Activated CD8-positive, alpha-beta T cell treated with anti-CD3 and anti-CD28 coated beads, Interleukin-2, amount 10 ng/mL, durations not matched to agents 7 days and 5 days (primary cell): ENCODE measurements at regions of chr12 and their contacts with region 1.

Region 1: GRCh38 chr12:62813031-62813829 is 121.7 kb downstream of the PPM1H start:
- DNase-seq: peak; percentile 52
- ATAC-seq: peak; percentile 55
- H3K4me3 Mint-ChIP-seq: peak overlapping the region; percentile 38
- H3K27ac Mint-ChIP-seq: no peak overlapping the region
- H3K4me1 Mint-ChIP-seq: peaks cover 21% of the 10 kb centered on the region
- H3K27me3 Mint-ChIP-seq: peaks cover 24% of the 10 kb centered on the region

Region 2: GRCh38 chr12:62793256-62794217 is 19.7 kb before region 1 on chr12:
- CTCF ChIA-PET with region 1: interaction called, 42 read pairs
- POLR2A ChIA-PET with region 1: no interaction called
- DNase-seq: peak; percentile 75
- ATAC-seq: no peak
- H3K4me3 Mint-ChIP-seq: no peak overlapping the region
- H3K27ac Mint-ChIP-seq: no peak overlapping the region
- H3K4me1 Mint-ChIP-seq: peaks cover 5% of the 10 kb centered on the region
- H3K27me3 Mint-ChIP-seq: peaks cover 21% of the 10 kb centered on the region